ENCODE measurements at regions of chr10 and their contacts with region 1.

Region 1: DNA sequence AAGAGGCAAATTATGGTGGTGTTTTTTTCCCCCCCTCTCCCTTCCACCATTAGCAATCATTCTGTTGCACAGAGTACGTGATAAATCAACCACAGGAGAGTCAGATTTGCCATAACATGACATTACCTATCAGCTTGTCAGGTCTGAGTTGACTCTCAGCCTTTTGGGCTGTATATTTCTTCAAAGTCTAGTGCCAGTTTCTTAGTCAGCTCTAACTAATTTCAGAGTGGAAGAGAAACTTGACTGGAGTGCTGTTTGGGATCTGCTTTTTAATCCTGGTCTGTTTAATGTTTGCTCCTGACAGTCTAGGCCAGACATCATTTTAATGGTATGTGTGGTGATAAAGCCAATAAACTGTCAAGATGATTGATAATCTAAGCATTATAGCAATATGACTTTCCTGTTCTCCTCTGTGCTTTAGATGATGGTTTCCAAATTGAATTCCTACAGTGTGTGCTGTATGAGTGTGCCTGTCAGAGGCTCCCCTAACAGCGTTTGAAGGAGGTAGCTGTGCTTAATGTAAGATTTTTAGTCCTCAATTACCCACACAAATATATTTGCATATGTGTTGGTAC is 76.9 kb downstream of the LRMDA start:
- DNase-seq: peak; percentile 37
- H3K4me3 ChIP-seq: no peak overlapping the region
- H3K27ac ChIP-seq: peak overlapping the region; percentile 62 to 76 (median 72)
- H3K4me1 ChIP-seq: peaks cover 16 to 70% (median 61%) of the 10 kb centered on the region in 4 donors
- H3K27me3 ChIP-seq: no peaks in the 10 kb centered on the region
- CTCF ChIP-seq: no peak
- EP300 ChIP-seq: no peak
- POLR2A ChIP-seq: no peak

Region 2: DNA sequence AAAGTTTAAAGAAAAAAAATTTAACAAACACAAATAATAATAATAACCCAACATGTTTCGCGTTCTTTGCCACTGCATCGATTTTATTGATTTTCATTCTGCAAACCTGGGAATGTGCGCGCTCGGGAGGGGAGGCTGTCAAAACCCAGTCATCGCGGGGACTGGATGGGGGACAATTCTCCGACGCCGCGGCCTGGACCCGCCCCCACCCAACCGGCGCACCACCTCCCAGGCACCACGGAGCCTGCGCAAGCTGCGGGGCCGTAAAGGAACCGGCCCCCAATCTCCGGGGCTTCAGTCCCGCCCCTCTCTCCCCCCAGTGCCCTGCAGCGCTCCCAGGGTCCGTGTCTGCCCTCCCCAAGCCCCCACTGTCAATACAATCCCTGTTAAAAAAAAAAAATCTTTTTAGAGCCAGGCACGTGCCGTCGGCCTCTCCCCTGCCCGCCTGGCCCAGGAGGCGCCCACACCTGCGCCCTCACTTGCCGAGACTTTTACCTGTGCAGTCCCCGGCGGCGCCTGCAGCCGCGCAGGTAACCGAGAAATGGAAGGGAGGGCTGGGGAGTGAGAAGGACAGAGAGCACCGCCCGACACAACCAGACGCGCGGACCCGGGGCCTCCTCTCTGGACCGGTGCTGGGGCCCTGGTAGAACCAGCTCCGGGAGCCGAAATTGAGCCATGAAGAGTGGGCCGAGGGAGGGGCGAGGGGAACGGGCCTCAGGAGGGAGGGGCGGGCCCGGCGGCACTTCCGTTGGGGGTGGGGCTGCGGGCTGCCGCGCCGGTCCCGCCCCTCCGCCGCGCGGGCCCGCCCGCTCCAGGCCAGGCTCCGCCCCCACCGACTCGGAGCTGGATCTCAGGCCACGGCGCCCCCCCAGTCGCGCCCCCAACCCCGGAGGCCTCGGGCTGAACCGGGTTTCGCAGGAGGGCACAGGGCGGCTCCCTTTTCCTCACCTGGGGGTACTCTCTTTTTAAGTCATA is 99.1 kb before region 1 on chr10:
- intact Hi-C with region 1: loop called (anchors 5 kb)
- DNase-seq: no peak
- H3K4me3 ChIP-seq: peak overlapping the region; percentile 78 to 93 (median 82)
- H3K27ac ChIP-seq: peak overlapping the region; percentile 99 to 100 (median 100)
- H3K4me1 ChIP-seq: peaks cover 17 to 56% (median 48%) of the 10 kb centered on the region in 4 donors
- H3K27me3 ChIP-seq: peaks cover 0 to 11% (median 0%) of the 10 kb centered on the region in 4 donors
- CTCF ChIP-seq: no peak
- EP300 ChIP-seq: no peak
- POLR2A ChIP-seq: peak; percentile 27

Region 3: DNA sequence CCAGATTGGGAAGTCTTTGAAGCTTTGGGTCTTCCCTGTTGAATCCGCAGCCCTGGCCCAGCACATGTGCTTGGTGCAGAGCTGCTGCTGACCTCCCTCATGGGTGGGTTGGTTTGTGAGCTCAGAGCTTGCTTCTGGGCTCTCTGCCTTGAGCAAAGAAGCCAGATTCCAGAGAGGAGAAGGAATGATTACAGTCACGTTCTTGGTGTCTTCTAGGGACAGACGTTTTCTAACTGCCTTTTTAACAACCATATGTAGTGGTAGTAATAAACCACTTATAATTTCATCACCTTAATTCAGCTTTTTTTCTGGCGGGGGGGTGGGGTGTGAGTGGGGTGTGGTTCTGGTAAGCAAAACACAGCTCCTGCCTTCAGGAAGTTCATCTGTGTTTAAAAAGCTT is 37.4 kb before region 1 on chr10:
- intact Hi-C with region 1: loop called (anchors 5 kb)
- DNase-seq: no peak
- H3K4me3 ChIP-seq: no peak overlapping the region
- H3K27ac ChIP-seq: no peak overlapping the region
- H3K4me1 ChIP-seq: peaks cover 24 to 52% (median 52%) of the 10 kb centered on the region in 4 donors
- H3K27me3 ChIP-seq: no peaks in the 10 kb centered on the region
- CTCF ChIP-seq: no peak
- EP300 ChIP-seq: no peak
- POLR2A ChIP-seq: no peak

Region 4: GRCh38 chr10:75612904-75613684 is 104.8 kb after region 1 on chr10:
- intact Hi-C with region 1: no loop called
- DNase-seq: no peak
- H3K4me3 ChIP-seq: no peak overlapping the region
- H3K27ac ChIP-seq: peak overlapping the region; percentile 1 to 56 (median 28)
- H3K4me1 ChIP-seq: peaks cover 20 to 53% (median 49%) of the 10 kb centered on the region in 4 donors
- H3K27me3 ChIP-seq: no peaks in the 10 kb centered on the region
- CTCF ChIP-seq: no peak
- EP300 ChIP-seq: no peak
- POLR2A ChIP-seq: no peak

Region 5: DNA sequence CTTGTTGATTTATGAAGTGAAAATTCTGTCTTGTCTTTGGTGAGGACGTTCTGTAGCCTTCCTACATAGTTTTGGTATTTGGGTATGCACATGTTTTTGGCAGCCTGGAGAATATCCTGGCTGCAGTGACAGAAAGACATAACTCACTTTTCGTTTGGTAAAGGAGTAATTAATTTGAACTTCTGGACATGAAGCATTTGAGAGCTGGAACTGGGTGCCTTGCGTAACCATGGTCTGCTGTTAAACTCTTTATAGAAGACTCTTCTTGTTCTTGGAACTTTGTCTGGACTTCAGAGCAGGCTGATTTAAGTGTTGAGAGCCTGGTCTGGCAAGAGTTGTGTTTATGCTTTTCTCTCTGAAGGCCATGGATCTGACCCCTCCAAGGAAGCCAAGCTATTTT is 154.4 kb after region 1 on chr10:
- intact Hi-C with region 1: loop called (anchors 5 kb)
- DNase-seq: peak; percentile 93
- H3K4me3 ChIP-seq: peak overlapping the region in 1 of 4 donors; percentile 5
- H3K27ac ChIP-seq: peak overlapping the region; percentile 77 to 86 (median 84)
- H3K4me1 ChIP-seq: peaks cover 27 to 79% (median 70%) of the 10 kb centered on the region in 4 donors
- H3K27me3 ChIP-seq: no peaks in the 10 kb centered on the region
- CTCF ChIP-seq: no peak
- EP300 ChIP-seq: peak; percentile 67
- POLR2A ChIP-seq: no peak

Region 6: DNA sequence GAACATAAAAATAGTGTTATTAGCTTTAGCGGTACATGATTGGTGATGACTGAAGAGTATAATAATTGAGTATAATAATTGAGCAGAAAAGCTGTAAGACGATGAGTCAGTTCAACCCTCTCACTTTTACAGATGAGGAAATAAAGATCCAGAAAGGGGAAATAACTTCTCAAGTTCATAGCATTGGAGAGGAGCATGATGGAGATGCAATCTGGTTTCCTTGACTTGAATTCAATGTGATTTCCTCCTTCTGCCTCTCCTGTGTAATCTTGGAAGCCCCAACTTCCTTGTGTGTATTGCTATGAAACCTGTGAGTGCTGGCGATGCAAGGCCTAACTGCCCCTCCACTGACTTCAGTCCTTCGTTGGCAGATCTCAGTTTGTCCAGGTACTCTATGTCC is 188.2 kb after region 1 on chr10:
- intact Hi-C with region 1: no loop called
- DNase-seq: no peak
- H3K4me3 ChIP-seq: no peak overlapping the region
- H3K27ac ChIP-seq: no peak overlapping the region
- H3K4me1 ChIP-seq: peaks cover 0 to 4% (median 2%) of the 10 kb centered on the region in 4 donors
- H3K27me3 ChIP-seq: no peaks in the 10 kb centered on the region
- CTCF ChIP-seq: no peak
- EP300 ChIP-seq: no peak
- POLR2A ChIP-seq: no peak

Measured in esophagus muscularis mucosa (tissue), 4 donors.